IMR-90 (cell line): ENCODE measurements at regions of chr2 and their contacts with region 1.

Region 1: GRCh38 chr2:182366625-182367024 is 60.2 kb downstream of the PDE1A start:
- DNase-seq: peak; percentile 75
- ATAC-seq: peak; percentile 32; the same call in 1 of the 2 replicates
- H3K4me3 ChIP-seq: no peak overlapping the region
- H3K27ac ChIP-seq: no peak overlapping the region
- H3K4me1 ChIP-seq: peaks cover 2% of the 10 kb centered on the region; the same call in 1 of the 2 replicates
- H3K27me3 ChIP-seq: no peaks in the 10 kb centered on the region
- CTCF ChIP-seq: no peak
- POLR2A ChIP-seq: no peak
- RAD21 ChIP-seq: no peak

Region 2: GRCh38 chr2:182377471-182377870 is 10.8 kb after region 1 on chr2:
- CTCF ChIA-PET with region 1: interaction called, 10 read pairs
- POLR2A ChIA-PET with region 1: interaction called, 3 read pairs
- dilution Hi-C with region 1: no loop called
- in situ Hi-C with region 1: no loop called
- intact Hi-C with region 1: no loop called
- DNase-seq: no peak
- ATAC-seq: no peak
- H3K4me3 ChIP-seq: no peak overlapping the region
- H3K27ac ChIP-seq: no peak overlapping the region
- H3K4me1 ChIP-seq: peaks cover 4% of the 10 kb centered on the region
- H3K27me3 ChIP-seq: no peaks in the 10 kb centered on the region
- CTCF ChIP-seq: no peak
- POLR2A ChIP-seq: no peak
- RAD21 ChIP-seq: no peak

Region 3: DNA sequence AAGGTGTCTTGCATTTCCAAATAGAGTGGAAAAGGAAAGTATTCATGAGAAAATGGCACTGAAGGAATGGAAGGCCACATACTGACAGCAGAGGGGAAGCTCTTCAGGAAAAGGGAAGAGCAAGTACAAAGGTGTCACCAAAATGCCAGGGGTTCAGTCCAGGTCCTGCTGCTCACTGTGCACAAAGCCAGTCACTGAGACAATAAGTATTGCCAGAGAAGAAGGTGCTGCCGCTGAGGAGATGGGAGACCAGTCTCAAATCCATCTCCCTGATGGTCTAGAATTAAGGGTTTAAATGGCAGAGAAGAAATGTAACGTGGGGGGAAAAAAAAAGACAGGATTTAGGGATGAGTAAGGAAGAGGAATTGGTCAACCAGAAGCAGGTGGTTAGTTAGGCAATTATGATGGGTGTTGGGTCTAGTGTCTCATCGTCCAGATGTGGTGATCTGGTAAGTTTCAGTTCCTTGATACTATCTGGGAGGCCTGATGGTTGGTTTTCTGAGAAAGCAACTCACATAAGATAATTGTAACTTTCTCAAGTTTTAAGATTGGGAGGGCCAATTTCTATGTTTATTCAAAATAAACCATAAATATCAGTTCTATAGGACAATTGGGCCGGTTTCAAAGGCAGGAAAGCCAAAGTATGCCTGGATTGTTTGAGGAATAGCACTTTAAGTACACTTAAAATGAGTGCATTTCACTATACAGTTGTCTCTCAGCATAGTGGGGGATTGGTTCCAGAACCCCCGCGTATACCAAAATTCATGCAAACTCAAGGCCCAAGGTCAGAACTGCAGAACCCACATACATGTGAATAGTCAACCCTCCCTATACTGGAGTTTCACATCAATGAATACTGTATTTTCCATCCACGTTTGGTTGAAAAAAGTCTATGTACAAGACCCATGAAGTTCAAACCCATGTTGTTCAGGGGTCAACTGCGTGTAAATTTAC is 240.4 kb after region 1 on chr2:
- CTCF ChIA-PET with region 1: no interaction called
- POLR2A ChIA-PET with region 1: no interaction called
- dilution Hi-C with region 1: no loop called
- in situ Hi-C with region 1: no loop called
- intact Hi-C with region 1: no loop called
- DNase-seq: no peak
- ATAC-seq: no peak
- H3K4me3 ChIP-seq: no peak overlapping the region
- H3K27ac ChIP-seq: no peak overlapping the region
- H3K4me1 ChIP-seq: peaks cover 2% of the 10 kb centered on the region
- H3K27me3 ChIP-seq: no peaks in the 10 kb centered on the region
- CTCF ChIP-seq: no peak
- POLR2A ChIP-seq: no peak
- RAD21 ChIP-seq: no peak